ENCODE measurements at regions of chr11 and their contacts with region 1.

Region 1: DNA sequence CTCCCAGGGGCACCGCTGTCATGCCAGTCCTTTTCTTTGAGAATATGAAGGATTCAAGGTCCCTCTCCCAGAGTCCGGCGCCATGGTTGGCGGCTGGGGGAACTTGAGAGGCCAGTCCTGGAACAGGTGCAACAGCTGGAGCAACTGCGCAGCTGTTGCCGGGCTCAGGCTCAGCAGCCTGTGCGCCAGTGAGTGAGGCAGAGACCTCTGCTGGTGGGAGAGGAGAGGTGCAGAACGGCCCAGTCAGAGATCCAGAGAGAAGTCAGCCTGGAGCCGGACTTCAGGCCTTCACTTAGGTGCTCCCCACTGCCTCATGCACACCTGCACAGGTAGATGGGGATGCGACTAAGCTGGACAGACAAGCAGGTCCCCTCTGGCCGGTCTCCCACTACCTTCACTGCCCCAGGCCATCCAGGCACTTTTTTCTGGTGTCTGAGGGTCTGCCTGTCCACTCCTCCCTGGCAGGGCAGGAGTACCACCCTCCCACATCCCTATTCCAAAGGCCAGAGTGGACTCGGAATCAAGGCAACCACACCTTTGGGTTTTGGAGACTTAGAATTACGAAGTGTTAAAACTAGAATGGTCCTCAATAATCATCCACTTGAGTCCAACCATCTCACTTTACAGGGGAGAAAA is 4.6 kb downstream of the CHRDL2 start:
- DNase-seq: peak; percentile 68 to 82 (median 79)
- ATAC-seq: peak; percentile 81 to 94 (median 90)
- H3K4me3 ChIP-seq: no peak overlapping the region
- H3K27ac ChIP-seq: peak overlapping the region in 1 of 12 donors; percentile 72
- H3K4me1 ChIP-seq: peaks cover 0 to 22% (median 11%) of the 10 kb centered on the region in 12 donors
- H3K27me3 ChIP-seq: peaks cover 4 to 31% (median 11%) of the 10 kb centered on the region in 9 donors
- CTCF ChIP-seq: peak; percentile 78 to 95 (median 91)
- POLR2A ChIP-seq: no peak

Region 2: DNA sequence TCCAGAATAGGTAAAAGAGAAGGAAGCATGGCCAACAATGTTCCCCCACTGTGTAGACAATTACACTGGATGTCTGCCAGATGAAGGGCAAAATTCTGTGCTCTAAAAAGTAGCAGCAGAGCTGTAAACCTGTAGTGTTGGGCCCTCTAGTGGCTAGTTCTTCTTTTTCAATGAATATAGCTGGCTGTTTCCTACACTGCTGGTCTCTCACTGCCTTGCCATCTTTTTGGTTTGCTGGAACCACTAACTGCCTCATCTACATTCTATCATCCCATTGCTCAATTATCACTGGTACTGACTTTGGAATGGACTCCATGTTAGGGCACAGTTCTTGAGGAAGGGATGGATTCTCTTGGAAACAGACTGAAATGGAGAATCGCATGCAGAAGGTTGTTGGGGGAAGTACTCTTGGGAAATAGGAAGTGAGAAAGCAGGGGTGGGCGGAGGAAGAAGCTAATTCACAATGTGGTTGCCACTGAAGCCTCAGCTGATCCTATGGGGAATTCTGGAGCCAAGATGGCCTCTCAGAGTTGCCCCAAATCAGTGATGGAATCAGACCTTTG is 277.2 kb before region 1 on chr11:
- intact Hi-C with region 1: loop called in 1 of 10 experiments (anchors 5 kb)
- DNase-seq: peak in 2 of 5 donors; percentile 53 to 70
- ATAC-seq: peak; percentile 82 to 89 (median 87)
- H3K4me3 ChIP-seq: no peak overlapping the region
- H3K27ac ChIP-seq: no peak overlapping the region
- H3K4me1 ChIP-seq: peaks cover 0 to 6% (median 0%) of the 10 kb centered on the region in 12 donors
- H3K27me3 ChIP-seq: peaks cover 0 to 6% (median 0%) of the 10 kb centered on the region in 9 donors
- CTCF ChIP-seq: peak; percentile 48 to 83 (median 77)
- POLR2A ChIP-seq: no peak

Region 3: DNA sequence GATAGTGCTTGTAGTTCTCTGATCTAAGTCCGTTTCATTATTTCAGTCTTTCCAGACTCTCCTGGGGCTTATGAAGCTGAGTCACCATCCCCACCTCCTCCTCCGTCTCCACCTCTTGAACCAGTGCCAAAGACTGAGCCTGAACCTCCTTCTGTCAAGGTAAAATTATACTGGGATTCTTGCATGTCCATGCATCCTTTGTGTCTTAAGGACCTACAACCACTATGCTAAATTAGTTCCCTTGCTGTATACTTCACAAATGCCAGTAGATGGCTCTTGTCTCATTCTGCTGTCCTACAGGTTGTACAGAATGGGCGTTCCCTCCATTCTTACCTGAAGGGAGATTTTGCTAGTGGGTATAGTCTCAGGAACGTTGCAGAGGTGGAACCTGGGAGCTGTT is 92.1 kb before region 1 on chr11:
- intact Hi-C with region 1: loop called in 9 of 10 experiments (anchors 1 to 5 kb)
- DNase-seq: no peak
- ATAC-seq: peak in 3 of 4 donors; percentile 71 to 84 (median 78)
- H3K4me3 ChIP-seq: no peak overlapping the region
- H3K27ac ChIP-seq: peak overlapping the region in 1 of 12 donors; percentile 74
- H3K4me1 ChIP-seq: peaks cover 0 to 11% (median 0%) of the 10 kb centered on the region in 12 donors
- H3K27me3 ChIP-seq: no peaks in the 10 kb centered on the region
- CTCF ChIP-seq: peak in 10 of 12 donors; percentile 6 to 50 (median 38)
- POLR2A ChIP-seq: no peak

Region 4: GRCh38 chr11:74647404-74647803 is 79.3 kb before region 1 on chr11:
- intact Hi-C with region 1: loop called in 2 of 10 experiments (anchors 5 kb)
- DNase-seq: no peak
- ATAC-seq: no peak
- H3K4me3 ChIP-seq: no peak overlapping the region
- H3K27ac ChIP-seq: peak overlapping the region in 1 of 12 donors; percentile 84
- H3K4me1 ChIP-seq: no peaks in the 10 kb centered on the region
- H3K27me3 ChIP-seq: no peaks in the 10 kb centered on the region
- CTCF ChIP-seq: no peak
- POLR2A ChIP-seq: no peak

Region 5: DNA sequence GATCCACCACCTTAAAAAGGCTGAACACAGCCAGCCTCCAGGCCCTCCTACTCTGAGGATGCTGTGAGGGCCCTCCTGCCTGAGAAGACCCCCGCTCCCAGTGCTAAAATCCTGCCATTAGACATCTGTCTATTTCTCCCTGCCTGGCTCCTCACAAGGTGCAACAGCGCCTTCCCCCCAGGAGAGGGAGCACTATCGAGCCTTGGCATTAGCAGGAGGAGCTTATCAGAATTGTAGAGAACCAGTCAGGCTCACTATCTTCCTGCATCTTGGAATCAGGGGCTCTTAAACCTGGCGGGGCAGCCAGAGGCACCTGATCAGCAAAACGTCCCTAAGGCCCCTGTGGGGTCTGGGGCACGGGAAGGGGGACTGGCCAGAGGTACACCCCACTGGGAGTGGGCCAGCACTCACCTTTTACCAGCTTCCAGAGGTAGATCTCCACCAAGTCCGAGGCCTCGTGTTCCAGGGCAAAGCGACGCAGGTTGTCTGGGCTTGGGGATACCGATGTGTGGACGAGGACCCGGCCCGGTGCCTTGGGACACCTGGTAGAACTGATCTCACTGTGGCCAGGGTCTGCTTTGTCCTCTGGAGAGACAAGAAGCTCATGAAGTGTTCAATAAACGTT is 24.2 kb before region 1 on chr11:
- intact Hi-C with region 1: loop called in 2 of 10 experiments (anchors 2 kb)
- DNase-seq: peak; percentile 54 to 78 (median 59)
- ATAC-seq: peak in 3 of 4 donors; percentile 55 to 77 (median 68)
- H3K4me3 ChIP-seq: no peak overlapping the region
- H3K27ac ChIP-seq: peak overlapping the region in 1 of 12 donors; percentile 38
- H3K4me1 ChIP-seq: peaks cover 0 to 7% (median 2%) of the 10 kb centered on the region in 12 donors
- H3K27me3 ChIP-seq: no peaks in the 10 kb centered on the region
- CTCF ChIP-seq: peak; percentile 75 to 96 (median 88)
- POLR2A ChIP-seq: peak in 1 of 2 donors; percentile 8

Region 6: DNA sequence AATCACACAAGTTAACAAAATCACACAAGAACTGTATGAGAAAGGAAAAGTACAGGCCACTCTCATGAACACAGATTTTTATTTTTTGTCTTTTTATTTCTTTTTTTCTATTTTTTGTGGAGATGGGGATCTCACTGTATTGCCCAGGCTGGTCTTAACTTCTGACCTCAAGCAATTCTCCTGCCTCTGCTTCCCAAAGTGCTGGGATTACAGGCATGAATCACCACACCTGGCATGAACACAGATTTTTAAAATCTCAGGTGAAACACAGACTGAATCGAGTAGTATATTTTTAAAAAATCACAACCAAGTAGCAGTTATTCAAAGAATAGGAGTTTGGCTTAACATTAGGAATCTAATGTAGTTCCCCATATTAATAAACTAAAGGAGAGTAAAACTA is 40.2 kb after region 1 on chr11:
- intact Hi-C with region 1: no loop called
- DNase-seq: no peak
- ATAC-seq: no peak
- H3K4me3 ChIP-seq: no peak overlapping the region
- H3K27ac ChIP-seq: no peak overlapping the region
- H3K4me1 ChIP-seq: peaks cover 0 to 7% (median 0%) of the 10 kb centered on the region in 12 donors
- H3K27me3 ChIP-seq: no peaks in the 10 kb centered on the region
- CTCF ChIP-seq: no peak
- POLR2A ChIP-seq: no peak